PC-9 (cell line): ENCODE measurements at regions of chr4 and their contacts with region 1.

Region 1: GRCh38 chr4:73450398-73451004 is 14.5 kb downstream of the AFP start:
- DNase-seq: peak in 1 of 2 experiments; percentile 43
- H3K4me3 ChIP-seq: no peak overlapping the region
- H3K27ac ChIP-seq: no peak overlapping the region
- H3K4me1 ChIP-seq: no peaks in the 10 kb centered on the region
- H3K27me3 ChIP-seq: no peaks in the 10 kb centered on the region
- CTCF ChIP-seq: no peak

Region 2: GRCh38 chr4:73729534-73730165 is 279.1 kb after region 1 on chr4:
- CTCF ChIA-PET with region 1: no interaction called
- POLR2A ChIA-PET with region 1: no interaction called
- intact Hi-C with region 1: no loop called
- DNase-seq: peak; percentile 16 to 51
- H3K4me3 ChIP-seq: no peak overlapping the region
- H3K27ac ChIP-seq: no peak overlapping the region
- H3K4me1 ChIP-seq: peaks cover 24% of the 10 kb centered on the region
- H3K27me3 ChIP-seq: no peaks in the 10 kb centered on the region
- CTCF ChIP-seq: peak; percentile 72

Region 3: GRCh38 chr4:73740353-73740778 is 289.9 kb after region 1 on chr4 and contains the start of gene CXCL8:
- CTCF ChIA-PET with region 1: no interaction called
- POLR2A ChIA-PET with region 1: no interaction called
- intact Hi-C with region 1: loop called (anchors 2 kb)
- DNase-seq: peak; percentile 56 to 83
- H3K4me3 ChIP-seq: peak within 1 kb of the TSS; percentile 24; the same call in 1 of the 2 replicates
- H3K27ac ChIP-seq: peak within 1 kb of the TSS; percentile 78
- H3K4me1 ChIP-seq: peaks cover 22% of the 10 kb centered on the region
- H3K27me3 ChIP-seq: no peaks in the 10 kb centered on the region
- CTCF ChIP-seq: no peak
- total RNA-seq, gene CXCL8: 0.35 and 0.38 TPM in 2 replicates